ENCODE measurements at regions of chr5 and their contacts with region 1.

Region 1: GRCh38 chr5:83718195-83718825 is 2.3 kb downstream of the HAPLN1 start:
- H3K4me3 Mint-ChIP-seq: no peak overlapping the region
- H3K27ac Mint-ChIP-seq: no peak overlapping the region
- H3K4me1 Mint-ChIP-seq: peaks cover 12% of the 10 kb centered on the region
- H3K27me3 Mint-ChIP-seq: peaks cover 58% of the 10 kb centered on the region

Region 2: DNA sequence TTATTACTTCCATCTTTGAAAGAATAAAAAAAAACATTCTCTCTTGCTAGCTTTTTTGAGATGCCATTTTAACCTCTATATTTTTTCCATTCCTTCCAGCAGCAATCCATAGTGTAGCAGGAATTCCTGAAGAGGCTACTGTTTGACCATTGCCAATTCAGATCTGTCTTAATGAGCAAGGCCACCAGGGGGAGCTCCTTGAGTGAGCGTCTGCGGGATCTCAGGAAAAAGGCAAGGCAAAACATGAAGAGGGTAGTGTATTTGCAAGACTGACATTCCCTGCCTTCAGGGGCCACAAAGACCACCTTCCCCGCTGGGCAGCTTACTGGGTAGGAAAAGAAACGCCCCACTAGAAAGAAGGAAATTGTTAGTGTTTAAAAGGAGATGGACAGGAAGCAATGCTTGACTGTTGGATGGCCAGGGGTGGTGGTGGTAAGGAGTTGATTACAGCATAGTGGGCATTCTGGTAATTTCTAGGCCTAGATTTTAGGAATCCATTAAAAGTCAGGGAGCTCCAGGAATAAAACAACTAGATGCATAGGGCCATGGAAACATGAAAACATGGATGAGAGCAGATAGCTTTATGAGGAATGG is 208.9 kb after region 1 on chr5:
- intact Hi-C with region 1: loop called (anchors 10 kb)
- H3K4me3 Mint-ChIP-seq: no peak overlapping the region
- H3K27ac Mint-ChIP-seq: no peak overlapping the region
- H3K4me1 Mint-ChIP-seq: no peaks in the 10 kb centered on the region
- H3K27me3 Mint-ChIP-seq: no peaks in the 10 kb centered on the region

Region 3: GRCh38 chr5:84255315-84255714 is 537.0 kb after region 1 on chr5:
- intact Hi-C with region 1: loop called (anchors 10 kb)
- H3K4me3 Mint-ChIP-seq: no peak overlapping the region
- H3K27ac Mint-ChIP-seq: no peak overlapping the region
- H3K4me1 Mint-ChIP-seq: peaks cover 10% of the 10 kb centered on the region
- H3K27me3 Mint-ChIP-seq: no peaks in the 10 kb centered on the region

Region 4: DNA sequence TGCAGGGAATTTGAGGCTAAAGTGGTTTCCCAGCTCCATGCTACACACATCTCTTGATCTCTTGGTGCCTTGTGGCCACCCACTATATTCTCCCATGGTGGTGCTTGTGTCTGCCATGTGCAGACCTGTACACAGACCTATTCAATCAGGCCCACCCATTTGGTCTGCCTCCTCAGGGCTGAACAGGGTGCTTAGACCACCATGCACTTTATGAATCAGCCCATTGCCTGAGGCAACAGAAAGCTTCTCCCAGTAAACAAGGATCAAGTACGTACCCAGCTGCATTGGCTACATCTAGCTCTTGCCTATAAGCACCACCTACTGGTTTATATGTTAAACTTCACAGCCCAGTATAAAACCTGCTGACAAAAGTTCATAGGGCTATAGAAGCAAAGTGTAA is 1330.7 kb after region 1 on chr5:
- intact Hi-C with region 1: loop called (anchors 5 kb)
- H3K4me3 Mint-ChIP-seq: no peak overlapping the region
- H3K27ac Mint-ChIP-seq: no peak overlapping the region
- H3K4me1 Mint-ChIP-seq: no peaks in the 10 kb centered on the region
- H3K27me3 Mint-ChIP-seq: no peaks in the 10 kb centered on the region

Measured in dendritic cell treated with granulocyte-macrophage colony-stimulating factor and Interleukin-4, amounts not matched to agents 40 ng/mL and 50 ng/mL, for 4 days (primary cell).